PC-9 (cell line): ENCODE measurements at regions of chr4 and their contacts with region 1.

Region 1: GRCh38 chr4:140359562-140360427 is 13.7 kb upstream of the SCOC start:
- DNase-seq: peak; percentile 52 to 75
- H3K4me3 ChIP-seq: no peak overlapping the region
- H3K27ac ChIP-seq: no peak overlapping the region
- H3K4me1 ChIP-seq: no peaks in the 10 kb centered on the region
- H3K27me3 ChIP-seq: no peaks in the 10 kb centered on the region
- CTCF ChIP-seq: peak; percentile 94

Region 2: DNA sequence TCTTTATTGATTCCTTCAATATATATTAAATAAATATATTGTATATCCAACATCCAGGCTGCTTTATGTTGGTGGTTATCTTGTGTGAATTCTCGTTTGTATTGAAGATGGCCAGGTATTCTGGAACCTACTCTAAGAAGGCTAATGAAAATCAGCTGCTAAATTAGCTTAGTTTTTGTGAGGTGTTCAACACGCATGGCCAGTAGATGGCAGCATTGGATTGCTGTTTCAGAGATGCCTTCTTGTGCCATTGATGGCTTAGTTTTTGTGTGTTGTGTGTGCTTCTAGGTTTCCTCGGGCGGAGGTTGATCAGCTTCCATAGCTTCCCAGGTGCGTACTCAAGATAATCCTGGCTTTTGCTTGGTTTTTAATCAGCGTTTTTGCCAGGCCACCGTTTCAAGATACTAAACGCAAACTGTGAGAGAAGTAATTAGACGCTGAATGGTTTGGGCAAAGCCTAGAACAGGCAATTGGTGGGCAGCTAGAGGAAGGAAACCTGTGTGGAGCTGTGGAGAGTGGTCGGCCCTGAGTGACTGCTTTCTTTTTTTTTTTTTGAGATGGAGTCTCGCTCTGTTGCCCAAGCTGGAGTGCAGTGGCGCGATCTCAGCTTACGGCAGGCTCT is 1329.1 kb before region 1 on chr4:
- CTCF ChIA-PET with region 1: no interaction called
- POLR2A ChIA-PET with region 1: no interaction called
- intact Hi-C with region 1: loop called (anchors 5 kb)
- DNase-seq: peak; percentile 55 to 57
- H3K4me3 ChIP-seq: no peak overlapping the region
- H3K27ac ChIP-seq: no peak overlapping the region
- H3K4me1 ChIP-seq: no peaks in the 10 kb centered on the region
- H3K27me3 ChIP-seq: no peaks in the 10 kb centered on the region
- CTCF ChIP-seq: peak; percentile 81

Region 3: GRCh38 chr4:139656614-139657486 is 702.9 kb before region 1 on chr4:
- CTCF ChIA-PET with region 1: interaction called, 5 read pairs
- POLR2A ChIA-PET with region 1: no interaction called
- intact Hi-C with region 1: loop called (anchors 1 kb)
- DNase-seq: peak in 1 of 2 experiments; percentile 53
- H3K4me3 ChIP-seq: no peak overlapping the region
- H3K27ac ChIP-seq: no peak overlapping the region
- H3K4me1 ChIP-seq: peaks cover 19% of the 10 kb centered on the region
- H3K27me3 ChIP-seq: no peaks in the 10 kb centered on the region
- CTCF ChIP-seq: peak; percentile 85

Region 4: GRCh38 chr4:140012688-140013486 is 346.9 kb before region 1 on chr4:
- CTCF ChIA-PET with region 1: interaction called, 3 read pairs
- POLR2A ChIA-PET with region 1: interaction called, 7 read pairs
- intact Hi-C with region 1: loop called (anchors 1 kb)
- DNase-seq: peak; percentile 74 to 91
- H3K4me3 ChIP-seq: no peak overlapping the region
- H3K27ac ChIP-seq: peak overlapping the region; percentile 74
- H3K4me1 ChIP-seq: peaks cover 30% of the 10 kb centered on the region
- H3K27me3 ChIP-seq: no peaks in the 10 kb centered on the region
- CTCF ChIP-seq: peak; percentile 79

Region 5: GRCh38 chr4:140326395-140326993 is 33.3 kb before region 1 on chr4:
- CTCF ChIA-PET with region 1: interaction called, 14 read pairs
- POLR2A ChIA-PET with region 1: no interaction called
- intact Hi-C with region 1: no loop called
- DNase-seq: peak in 1 of 2 experiments; percentile 25
- H3K4me3 ChIP-seq: no peak overlapping the region
- H3K27ac ChIP-seq: no peak overlapping the region
- H3K4me1 ChIP-seq: no peaks in the 10 kb centered on the region
- H3K27me3 ChIP-seq: no peaks in the 10 kb centered on the region
- CTCF ChIP-seq: peak; percentile 55

Region 6: GRCh38 chr4:140400111-140400510 is 40.3 kb after region 1 on chr4:
- CTCF ChIA-PET with region 1: no interaction called
- POLR2A ChIA-PET with region 1: no interaction called
- intact Hi-C with region 1: no loop called
- DNase-seq: no peak
- H3K4me3 ChIP-seq: no peak overlapping the region
- H3K27ac ChIP-seq: no peak overlapping the region
- H3K4me1 ChIP-seq: no peaks in the 10 kb centered on the region
- H3K27me3 ChIP-seq: no peaks in the 10 kb centered on the region
- CTCF ChIP-seq: no peak

Region 7: GRCh38 chr4:140756319-140757231 is 396.8 kb after region 1 on chr4 and contains the start of gene TBC1D9:
- CTCF ChIA-PET with region 1: no interaction called
- POLR2A ChIA-PET with region 1: interaction called, 3 read pairs
- intact Hi-C with region 1: loop called (anchors 10 kb)
- DNase-seq: peak; percentile 80 to 84
- H3K4me3 ChIP-seq: peak within 1 kb of the TSS; percentile 78
- H3K27ac ChIP-seq: peak within 1 kb of the TSS; percentile 81
- H3K4me1 ChIP-seq: peaks cover 15% of the 10 kb centered on the region
- H3K27me3 ChIP-seq: no peaks in the 10 kb centered on the region
- CTCF ChIP-seq: no peak
- total RNA-seq, gene TBC1D9: 17.0 and 17.6 TPM in 2 replicates

Region 8: GRCh38 chr4:140884431-140885058 is 524.8 kb after region 1 on chr4:
- CTCF ChIA-PET with region 1: interaction called, 9 read pairs
- POLR2A ChIA-PET with region 1: no interaction called
- intact Hi-C with region 1: loop called (anchors 1 kb)
- DNase-seq: peak; percentile 48 to 55
- H3K4me3 ChIP-seq: no peak overlapping the region
- H3K27ac ChIP-seq: no peak overlapping the region
- H3K4me1 ChIP-seq: no peaks in the 10 kb centered on the region
- H3K27me3 ChIP-seq: no peaks in the 10 kb centered on the region
- CTCF ChIP-seq: peak; percentile 75